ENCODE measurements at regions of chr14 and their contacts with region 1.

Region 1: DNA sequence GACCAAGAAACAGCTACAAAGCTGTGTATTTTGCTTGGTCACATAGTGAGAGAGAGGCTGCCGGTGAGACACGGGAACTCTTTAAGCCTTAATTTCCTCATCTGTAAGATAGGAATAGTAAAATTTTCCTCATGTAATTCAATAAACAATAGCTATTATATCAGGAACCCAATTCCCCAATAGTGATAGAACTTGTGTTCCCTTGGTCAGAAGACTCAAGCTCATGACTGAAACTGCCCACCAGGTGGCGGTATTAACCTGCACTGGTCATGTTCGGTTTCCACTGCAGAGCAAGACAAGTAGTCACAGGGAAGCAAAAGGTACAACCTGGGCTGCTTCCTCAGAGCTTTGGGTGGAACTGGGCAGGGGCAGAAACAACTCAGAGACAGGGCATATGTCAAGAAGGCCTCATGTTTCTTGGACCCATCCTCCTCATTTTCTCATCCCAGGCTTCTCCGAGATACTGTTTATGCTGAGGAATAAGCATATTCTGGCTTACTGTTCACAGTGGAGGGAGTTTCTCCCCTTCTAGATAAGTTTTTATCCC is 4.2 kb upstream of the AJUBA start:
- DNase-seq: peak; percentile 94
- ATAC-seq: peak; percentile 49
- H3K4me3 ChIP-seq: no peak overlapping the region
- H3K27ac ChIP-seq: no peak overlapping the region
- H3K4me1 ChIP-seq: no peaks in the 10 kb centered on the region; the same call in 1 of the 2 replicates
- H3K27me3 ChIP-seq: no peaks in the 10 kb centered on the region
- CTCF ChIP-seq: peak; percentile 95

Region 2: DNA sequence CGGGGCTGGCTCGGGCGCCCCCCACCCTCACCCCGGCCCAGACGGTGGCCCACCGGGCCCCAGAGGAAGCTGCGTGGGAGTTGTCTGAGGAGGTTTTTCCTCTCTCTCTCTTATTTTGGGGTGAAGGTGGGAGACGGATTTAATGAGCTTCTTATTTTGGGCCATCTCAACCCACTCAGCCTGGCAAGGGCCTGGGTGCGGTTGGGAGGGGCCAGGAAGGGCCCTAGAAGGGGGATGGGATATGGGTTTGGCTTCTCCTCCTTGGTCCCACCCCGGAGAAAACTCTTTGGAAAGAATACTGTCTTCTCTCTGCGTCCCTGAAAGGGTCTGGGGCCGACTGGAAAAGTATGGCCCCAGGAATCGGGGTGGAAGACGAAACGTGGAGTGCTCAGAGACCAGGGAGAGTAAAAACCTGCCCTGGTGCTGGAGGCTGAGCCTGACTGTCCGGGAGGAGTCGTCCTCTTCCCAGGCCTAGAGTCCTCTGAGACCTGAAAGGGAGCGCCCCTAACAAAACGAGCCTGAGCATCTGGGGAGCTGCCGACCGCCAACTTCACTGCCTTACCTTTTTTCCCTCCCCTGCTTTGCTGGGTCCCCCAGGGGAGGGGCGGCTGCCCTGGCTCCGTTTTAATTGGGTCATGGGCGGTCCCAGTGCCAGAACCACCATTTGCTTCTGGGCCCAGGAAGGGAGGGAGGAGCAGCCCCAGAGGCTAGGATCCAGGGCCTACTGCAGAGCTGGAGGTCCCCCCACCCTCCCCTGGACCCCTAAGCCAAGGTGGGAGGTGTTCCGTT is 148.6 kb before region 1 on chr14:
- CTCF ChIA-PET with region 1: no interaction called
- POLR2A ChIA-PET with region 1: no interaction called
- intact Hi-C with region 1: no loop called
- DNase-seq: peak; percentile 51
- ATAC-seq: peak; percentile 37
- H3K4me3 ChIP-seq: peak overlapping the region; percentile 93
- H3K27ac ChIP-seq: peak overlapping the region; percentile 47
- H3K4me1 ChIP-seq: peaks cover 22% of the 10 kb centered on the region; the same call in 1 of the 2 replicates
- H3K27me3 ChIP-seq: no peaks in the 10 kb centered on the region
- CTCF ChIP-seq: no peak

Region 3: DNA sequence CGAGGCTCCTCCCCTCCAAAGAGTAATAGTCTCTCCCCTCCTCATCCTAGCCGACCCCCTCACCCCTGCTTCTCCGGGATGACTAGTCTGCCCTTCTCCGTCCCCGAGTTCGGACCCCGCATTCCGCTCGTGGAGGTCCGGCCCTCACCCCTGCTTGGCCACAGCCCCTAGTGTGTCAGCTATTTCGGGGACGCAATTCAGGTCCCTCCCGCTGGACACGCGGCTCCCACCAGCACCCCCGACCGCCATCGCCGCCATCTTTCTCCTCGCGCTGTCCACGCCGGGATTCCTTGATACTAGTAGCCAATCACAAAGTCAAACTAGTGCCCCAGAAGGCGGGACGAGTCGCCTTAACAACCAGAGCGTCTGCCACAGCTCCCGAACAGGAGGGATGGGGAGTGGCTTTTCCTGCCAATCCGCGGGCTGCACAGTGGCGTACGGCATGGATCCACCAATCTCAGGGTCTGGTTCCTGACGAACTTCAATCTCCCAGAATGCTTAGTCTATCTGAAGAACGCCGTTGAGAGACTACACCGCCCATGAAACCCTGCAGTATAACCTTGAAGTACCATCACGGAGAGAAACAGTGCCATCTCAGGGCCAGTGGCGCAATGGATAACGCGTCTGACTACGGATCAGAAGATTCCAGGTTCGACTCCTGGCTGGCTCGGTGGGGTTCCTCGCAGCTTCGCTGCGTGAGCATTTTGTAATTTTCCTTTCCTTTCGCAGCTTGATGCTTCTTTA is 57.3 kb before region 1 on chr14 and contains the start of gene PRMT5:
- CTCF ChIA-PET with region 1: interaction called, 18 read pairs
- POLR2A ChIA-PET with region 1: no interaction called
- intact Hi-C with region 1: loop called (anchors 1 kb)
- DNase-seq: peak; percentile 99
- ATAC-seq: peak; percentile 90
- H3K4me3 ChIP-seq: peak within 1 kb of the TSS; percentile 90
- H3K27ac ChIP-seq: peak within 1 kb of the TSS; percentile 54
- H3K4me1 ChIP-seq: peaks cover 30% of the 10 kb centered on the region
- H3K27me3 ChIP-seq: no peaks in the 10 kb centered on the region
- CTCF ChIP-seq: no peak
- total RNA-seq, gene PRMT5: 101 and 113 TPM in 2 replicates

Region 4: DNA sequence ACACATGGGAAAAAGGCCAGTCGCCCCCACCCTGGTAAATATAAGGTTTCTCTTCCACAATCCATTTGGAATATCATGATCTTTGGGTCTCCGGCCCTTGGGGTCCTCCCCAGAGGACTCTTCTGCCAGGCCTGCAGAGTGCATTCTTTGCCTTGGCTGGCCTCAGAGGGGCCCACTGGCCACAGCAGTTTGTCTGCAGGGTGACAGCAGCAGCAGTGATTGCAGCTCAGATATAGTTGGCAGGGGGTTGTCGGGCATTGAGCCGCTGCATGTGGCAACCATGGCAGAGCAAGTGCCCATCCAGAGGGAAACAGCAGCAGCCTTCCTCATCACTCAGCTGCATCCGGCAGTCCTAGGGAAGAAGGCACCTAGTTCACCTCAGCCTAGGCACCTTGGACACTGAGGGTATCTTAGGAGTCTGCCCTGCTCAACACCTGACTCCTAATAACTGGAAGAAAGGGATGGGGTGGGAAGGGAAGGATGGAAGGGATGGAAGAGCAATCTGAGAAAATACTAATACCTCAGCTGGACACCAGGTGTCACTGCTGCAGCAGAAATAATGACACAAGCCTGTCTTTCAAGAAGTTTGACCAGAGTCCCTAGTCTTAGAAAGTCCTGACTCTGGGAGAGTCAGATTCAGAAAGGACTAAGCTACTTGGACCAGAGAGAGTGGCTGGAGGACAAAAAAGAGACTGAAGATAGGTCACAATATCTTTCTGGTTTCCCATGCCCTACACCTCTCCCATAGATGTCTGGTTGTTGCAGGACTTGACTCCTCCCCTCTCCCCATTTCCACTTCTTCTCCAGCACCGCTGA is 13.2 kb before region 1 on chr14:
- CTCF ChIA-PET with region 1: interaction called, 27 read pairs
- POLR2A ChIA-PET with region 1: interaction called, 16 read pairs
- intact Hi-C with region 1: loop called (anchors 1 kb)
- DNase-seq: peak; percentile 87
- ATAC-seq: peak; percentile 30
- H3K4me3 ChIP-seq: no peak overlapping the region
- H3K27ac ChIP-seq: no peak overlapping the region
- H3K4me1 ChIP-seq: peaks cover 28% of the 10 kb centered on the region
- H3K27me3 ChIP-seq: no peaks in the 10 kb centered on the region
- CTCF ChIP-seq: peak; percentile 79

Region 5: DNA sequence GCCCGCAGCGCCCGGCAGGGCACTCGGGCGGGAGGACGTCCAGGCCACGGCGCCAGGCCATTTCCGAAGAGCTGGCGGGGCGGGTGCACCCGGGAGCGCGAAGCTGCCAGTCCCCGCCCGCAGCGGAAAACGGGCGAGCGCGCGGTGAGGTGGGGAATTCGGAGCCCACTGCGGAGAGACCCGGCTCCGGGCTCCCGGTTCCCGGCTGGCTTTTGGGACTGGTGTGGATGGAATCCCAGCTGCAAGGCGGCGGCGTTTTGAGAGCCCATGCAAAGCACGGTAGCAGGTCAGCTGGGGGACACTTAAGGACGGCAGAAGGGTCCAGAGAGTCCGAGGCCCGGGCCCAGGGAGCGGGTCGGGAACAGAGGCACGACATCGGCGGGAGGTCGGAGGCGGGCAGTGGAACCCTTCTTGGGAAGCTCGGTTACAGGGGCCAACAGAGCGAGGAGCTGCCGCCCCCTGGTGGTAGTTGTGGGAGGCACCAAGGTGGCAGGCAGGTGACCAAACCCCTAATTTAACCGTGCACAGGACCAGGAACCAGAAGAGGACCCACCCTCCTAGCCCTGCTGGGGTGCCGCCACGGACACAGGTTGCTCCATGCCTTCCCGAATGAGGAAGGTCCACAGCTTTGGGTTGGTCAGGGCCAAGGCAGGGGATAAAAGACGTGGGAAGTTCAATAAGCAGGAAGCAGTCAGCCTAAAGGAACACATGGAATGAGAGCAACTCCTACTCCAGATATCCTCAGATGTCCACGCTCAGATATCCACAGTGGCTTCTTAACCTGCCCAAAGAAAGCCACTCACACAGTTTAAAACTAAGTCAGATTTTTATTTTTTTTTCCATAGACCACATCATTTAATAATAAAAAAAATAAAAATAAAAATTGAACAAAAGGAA is 71.4 kb after region 1 on chr14:
- CTCF ChIA-PET with region 1: interaction called, 26 read pairs
- POLR2A ChIA-PET with region 1: no interaction called
- intact Hi-C with region 1: loop called (anchors 1 kb)
- DNase-seq: peak; percentile 90
- ATAC-seq: peak; percentile 69
- H3K4me3 ChIP-seq: peak overlapping the region; percentile 85
- H3K27ac ChIP-seq: no peak overlapping the region
- H3K4me1 ChIP-seq: peaks cover 21% of the 10 kb centered on the region
- H3K27me3 ChIP-seq: no peaks in the 10 kb centered on the region
- CTCF ChIP-seq: peak; percentile 94

Region 6: DNA sequence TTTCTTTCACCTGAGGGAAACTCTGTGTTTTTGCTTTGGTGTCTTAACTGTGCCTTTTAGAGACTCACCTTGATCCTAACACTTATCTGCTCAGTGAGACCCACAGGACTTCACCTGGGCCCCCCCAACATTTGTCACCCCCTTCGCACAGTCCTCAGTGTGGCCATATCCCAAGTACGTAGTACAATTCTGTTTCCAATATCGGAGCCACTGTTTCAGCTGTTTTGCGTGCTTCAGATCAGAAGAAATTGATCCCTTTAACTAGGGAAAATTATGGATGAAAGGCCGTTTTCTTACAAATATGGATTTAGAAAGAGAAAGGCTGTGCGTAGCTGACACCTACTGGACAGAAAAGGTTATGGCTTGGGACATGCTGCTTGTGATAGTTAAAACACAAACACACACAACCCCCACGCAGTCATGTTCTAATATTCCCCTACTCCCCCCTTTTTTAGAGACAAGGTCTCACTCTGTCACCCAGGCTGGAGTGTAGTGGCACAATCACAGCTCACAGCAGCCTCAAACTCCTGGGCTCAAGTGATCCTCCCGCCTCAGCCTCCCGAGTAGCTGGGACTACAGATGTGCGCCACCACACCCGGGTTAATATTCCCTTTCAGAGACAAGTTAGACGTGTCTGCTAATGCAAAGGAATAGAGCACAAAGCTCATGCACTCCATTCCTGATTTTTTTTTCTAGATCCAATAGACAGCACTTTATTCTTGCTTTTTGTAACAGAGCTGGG is 200.5 kb after region 1 on chr14:
- CTCF ChIA-PET with region 1: no interaction called
- POLR2A ChIA-PET with region 1: no interaction called
- intact Hi-C with region 1: loop called (anchors 10 kb)
- DNase-seq: peak; percentile 76
- ATAC-seq: peak; percentile 57
- H3K4me3 ChIP-seq: no peak overlapping the region
- H3K27ac ChIP-seq: no peak overlapping the region
- H3K4me1 ChIP-seq: peaks cover 13% of the 10 kb centered on the region
- H3K27me3 ChIP-seq: no peaks in the 10 kb centered on the region
- CTCF ChIP-seq: peak; percentile 87